SK-N-SH (cell line): ENCODE measurements at regions of chr20 and their contacts with region 1.

Region 1: DNA sequence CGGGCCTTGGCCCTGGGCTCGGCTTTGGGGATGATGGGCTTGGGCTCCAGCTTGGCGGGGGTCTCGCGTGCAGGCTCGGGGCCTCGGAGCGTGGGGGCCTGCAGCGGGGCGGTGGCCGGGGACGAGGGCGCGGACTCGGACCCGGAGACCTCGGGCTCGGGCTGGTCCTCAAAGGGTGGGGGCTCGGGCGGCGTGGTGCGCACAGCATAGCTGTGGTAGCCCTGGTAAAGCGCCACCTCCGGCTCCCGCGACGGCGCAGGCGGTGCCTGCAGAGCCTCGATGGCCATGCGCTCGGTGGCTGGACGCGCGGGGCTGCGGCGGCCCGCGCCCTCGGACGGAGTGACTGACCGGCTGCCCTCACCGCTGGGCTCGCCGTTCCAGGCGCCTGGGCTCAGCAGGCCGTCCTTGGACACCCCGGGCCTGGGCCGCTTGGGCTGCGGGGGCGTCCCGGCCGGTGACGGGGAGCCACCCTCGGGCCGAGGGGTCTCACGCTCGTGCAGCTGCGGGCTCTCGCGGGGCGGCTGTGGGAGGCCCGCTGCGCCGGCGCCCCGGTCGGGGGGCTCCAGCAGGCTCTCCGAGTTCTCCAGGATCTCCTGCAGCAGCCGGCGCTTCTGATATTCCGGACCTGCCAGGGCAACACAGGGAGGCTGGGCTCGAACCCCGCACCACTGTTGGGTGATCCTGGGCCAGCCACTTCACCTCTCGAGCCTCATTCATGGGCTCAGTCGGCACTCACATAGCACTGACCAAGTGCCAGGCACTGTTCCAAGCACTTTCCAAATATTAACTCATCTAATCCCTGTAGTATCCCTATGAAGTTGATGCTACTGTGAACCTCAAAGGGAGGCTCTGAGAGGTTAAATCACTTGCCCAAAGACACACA is 71.0 kb downstream of the JPH2 start:
- DNase-seq: peak; percentile 52
- H3K4me3 ChIP-seq: no peak overlapping the region
- H3K27ac ChIP-seq: no peak overlapping the region
- H3K4me1 ChIP-seq: no peaks in the 10 kb centered on the region; a peak in 2 of 4 replicates
- H3K27me3 ChIP-seq: no peaks in the 10 kb centered on the region
- CTCF ChIP-seq: no peak
- EP300 ChIP-seq: no peak
- RAD21 ChIP-seq: no peak

Region 2: GRCh38 chr20:43803276-43803675 is 312.7 kb before region 1 on chr20:
- CTCF ChIA-PET with region 1: no interaction called
- POLR2A ChIA-PET with region 1: no interaction called
- DNase-seq: no peak
- H3K4me3 ChIP-seq: no peak overlapping the region
- H3K27ac ChIP-seq: no peak overlapping the region
- H3K4me1 ChIP-seq: peaks cover 0 to 16% of the 10 kb centered on the region in 2 experiments; a peak in 2 of 4 replicates
- H3K27me3 ChIP-seq: no peaks in the 10 kb centered on the region; the same call in 1 of the 2 replicates
- CTCF ChIP-seq: no peak
- EP300 ChIP-seq: no peak
- RAD21 ChIP-seq: no peak

Region 3: GRCh38 chr20:44080646-44081267 is 35.2 kb before region 1 on chr20:
- CTCF ChIA-PET with region 1: interaction called, 14 read pairs
- POLR2A ChIA-PET with region 1: no interaction called
- DNase-seq: peak; percentile 79
- H3K4me3 ChIP-seq: no peak overlapping the region; a peak in 1 of 4 replicates
- H3K27ac ChIP-seq: peak overlapping the region in 1 of 2 experiments; percentile 30; a peak in 1 of 4 replicates
- H3K4me1 ChIP-seq: peaks cover 7 to 17% of the 10 kb centered on the region in 2 experiments; a peak in 3 of 4 replicates
- H3K27me3 ChIP-seq: no peaks in the 10 kb centered on the region
- CTCF ChIP-seq: peak; percentile 98
- EP300 ChIP-seq: no peak
- RAD21 ChIP-seq: peak; percentile 99

Region 4: GRCh38 chr20:44104798-44105517 is 11.0 kb before region 1 on chr20:
- CTCF ChIA-PET with region 1: interaction called, 18 read pairs
- POLR2A ChIA-PET with region 1: no interaction called
- DNase-seq: peak; percentile 52
- H3K4me3 ChIP-seq: no peak overlapping the region
- H3K27ac ChIP-seq: no peak overlapping the region
- H3K4me1 ChIP-seq: peaks cover 0 to 6% of the 10 kb centered on the region in 2 experiments; a peak in 2 of 4 replicates
- H3K27me3 ChIP-seq: no peaks in the 10 kb centered on the region
- CTCF ChIP-seq: no peak
- EP300 ChIP-seq: no peak
- RAD21 ChIP-seq: no peak

Region 5: GRCh38 chr20:44137210-44137801 is 21.3 kb after region 1 on chr20:
- CTCF ChIA-PET with region 1: interaction called, 40 read pairs
- POLR2A ChIA-PET with region 1: no interaction called
- DNase-seq: no peak
- H3K4me3 ChIP-seq: no peak overlapping the region
- H3K27ac ChIP-seq: no peak overlapping the region
- H3K4me1 ChIP-seq: no peaks in the 10 kb centered on the region
- H3K27me3 ChIP-seq: no peaks in the 10 kb centered on the region
- CTCF ChIP-seq: no peak
- EP300 ChIP-seq: no peak
- RAD21 ChIP-seq: no peak

Region 6: DNA sequence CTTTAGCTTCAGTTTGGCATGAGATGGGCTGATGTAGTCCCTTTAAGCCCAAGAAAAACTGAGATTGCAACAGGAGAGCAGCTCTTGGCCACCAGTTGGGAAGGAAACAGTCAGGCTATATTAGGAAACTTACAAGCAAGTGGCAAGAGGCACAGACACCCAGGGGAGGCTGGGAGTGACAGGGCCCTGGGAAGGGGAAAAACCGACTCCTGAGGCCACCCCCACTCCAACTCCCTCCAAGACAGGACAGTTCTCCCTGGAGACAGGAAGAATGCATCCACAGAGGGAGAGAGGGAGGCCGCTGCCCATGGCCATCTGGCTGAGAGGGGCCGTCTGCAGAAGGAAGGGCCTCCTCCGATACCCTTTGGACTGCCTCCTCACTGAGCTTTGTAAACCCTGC is 50.5 kb after region 1 on chr20:
- CTCF ChIA-PET with region 1: interaction called, 22 read pairs
- POLR2A ChIA-PET with region 1: no interaction called
- DNase-seq: no peak
- H3K4me3 ChIP-seq: no peak overlapping the region
- H3K27ac ChIP-seq: peak overlapping the region; percentile 75 to 79; a peak in 3 of 4 replicates
- H3K4me1 ChIP-seq: peaks cover 5 to 23% of the 10 kb centered on the region in 2 experiments; a peak in 2 of 4 replicates
- H3K27me3 ChIP-seq: no peaks in the 10 kb centered on the region
- CTCF ChIP-seq: no peak
- EP300 ChIP-seq: no peak
- RAD21 ChIP-seq: no peak

Region 7: DNA sequence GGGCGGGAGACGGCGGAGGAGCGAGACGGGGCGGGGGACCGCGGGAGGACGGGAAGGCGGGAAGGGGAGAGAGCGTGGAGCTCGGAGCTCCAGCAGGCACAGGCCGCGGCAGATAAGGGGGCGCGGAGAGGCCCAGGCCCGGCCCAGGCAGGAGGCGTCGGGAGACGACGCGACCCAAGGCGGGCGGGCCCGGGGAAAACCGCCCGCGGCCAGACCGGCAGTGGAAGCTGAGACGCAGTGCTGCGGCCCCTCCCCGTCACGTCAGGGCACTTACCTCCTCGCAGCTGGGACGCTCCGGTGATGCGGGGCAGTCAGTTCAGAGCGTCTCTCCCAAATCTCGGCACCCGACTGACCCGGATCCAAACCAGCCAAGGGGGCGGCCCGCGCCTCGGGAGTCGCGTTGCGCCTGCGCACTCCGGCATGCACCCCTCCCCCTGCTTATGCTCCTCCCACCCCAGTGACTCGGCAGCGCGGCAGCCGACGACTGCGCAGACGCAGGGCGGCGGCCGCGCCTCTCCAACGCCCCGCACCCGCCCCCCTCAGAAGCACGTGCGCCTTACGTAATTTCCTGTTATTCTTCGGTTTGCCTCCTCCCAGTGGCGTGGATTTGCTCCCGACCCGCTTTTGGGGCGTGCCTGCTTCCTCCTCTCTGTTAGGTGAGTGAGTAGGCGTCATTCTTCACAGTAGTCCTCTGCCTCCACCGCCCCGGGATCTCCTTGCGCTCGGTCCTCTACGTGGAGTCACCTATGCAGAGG is 94.6 kb after region 1 on chr20 and contains the start of gene OSER1:
- CTCF ChIA-PET with region 1: interaction called, 22 read pairs
- POLR2A ChIA-PET with region 1: no interaction called
- DNase-seq: peak; percentile 100
- H3K4me3 ChIP-seq: peak within 1 kb of the TSS; percentile 92 to 97
- H3K27ac ChIP-seq: peak within 1 kb of the TSS; percentile 84 to 92
- H3K4me1 ChIP-seq: peaks cover 5 to 19% of the 10 kb centered on the region in 2 experiments; a peak in 3 of 4 replicates
- H3K27me3 ChIP-seq: no peaks in the 10 kb centered on the region
- CTCF ChIP-seq: no peak
- EP300 ChIP-seq: peak in 1 of 2 experiments; percentile 23; a peak in 1 of 4 replicates
- RAD21 ChIP-seq: no peak
- polyA plus RNA-seq, gene OSER1: 22.3 and 31.0 TPM in 2 replicates